ENCODE measurements at regions of chr19 and their contacts with region 1.

Region 1: GRCh38 chr19:6551607-6552450 is 21.0 kb downstream of the TNFSF9 start:
- DNase-seq: peak; percentile 40
- H3K4me3 Mint-ChIP-seq: no peak overlapping the region
- H3K27ac Mint-ChIP-seq: no peak overlapping the region
- H3K4me1 Mint-ChIP-seq: peaks cover 6% of the 10 kb centered on the region
- H3K27me3 Mint-ChIP-seq: peaks cover 8% of the 10 kb centered on the region

Region 2: GRCh38 chr19:6610934-6611852 is 59.4 kb after region 1 on chr19:
- intact Hi-C with region 1: loop called (anchors 10 kb)
- DNase-seq: no peak
- H3K4me3 Mint-ChIP-seq: no peak overlapping the region
- H3K27ac Mint-ChIP-seq: no peak overlapping the region
- H3K4me1 Mint-ChIP-seq: peaks cover 25% of the 10 kb centered on the region
- H3K27me3 Mint-ChIP-seq: peaks cover 27% of the 10 kb centered on the region